Breast epithelium (tissue), 4 donors: ENCODE measurements at regions of chr16 and their contacts with region 1.

Region 1: DNA sequence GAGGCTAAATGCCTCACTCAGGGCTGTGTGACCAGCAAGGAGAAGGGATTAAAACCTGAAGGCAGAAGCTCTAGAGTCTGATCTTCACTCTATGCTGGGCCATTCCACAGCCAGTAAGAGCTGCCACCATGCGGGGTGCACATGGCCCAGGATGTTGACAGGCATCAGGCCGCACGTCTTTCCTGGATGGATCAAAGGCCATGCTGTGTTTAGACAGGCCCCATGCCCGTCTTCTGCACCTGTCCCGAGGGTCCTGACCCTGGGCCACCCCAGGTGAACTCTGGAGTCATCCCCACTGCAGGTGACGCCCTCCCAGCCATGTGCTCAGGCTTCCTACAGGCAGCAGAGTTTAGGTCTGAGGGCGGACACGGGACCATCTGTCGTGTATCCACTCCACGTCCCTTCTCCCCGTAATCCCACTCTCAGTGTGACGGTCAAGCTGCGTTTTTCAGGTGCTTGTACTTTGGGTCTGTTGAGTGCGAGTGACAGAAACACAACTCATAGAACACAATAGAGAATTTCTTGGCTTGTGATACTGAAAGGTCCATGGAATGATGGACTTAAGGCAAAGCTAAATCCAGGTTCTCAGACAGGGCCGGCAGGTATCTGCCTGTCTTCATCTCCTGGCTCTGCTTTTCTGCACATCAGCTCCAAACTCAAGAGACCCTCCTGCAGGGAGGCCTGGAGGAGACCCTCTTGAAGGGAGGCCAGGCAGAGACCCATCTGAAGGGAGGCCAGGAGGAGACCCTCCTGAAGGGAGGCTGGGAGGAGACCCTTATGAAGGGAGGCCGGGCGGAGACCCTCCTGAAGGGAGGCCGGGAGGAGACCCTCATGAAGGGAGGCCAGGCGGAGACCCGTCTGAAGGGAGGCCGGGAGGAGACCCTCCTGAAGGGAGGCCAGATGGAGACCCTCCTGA is 13.2 kb downstream of the ZNF469 start:
- DNase-seq: no peak
- H3K4me3 ChIP-seq: no peak overlapping the region
- H3K27ac ChIP-seq: no peak overlapping the region
- H3K4me1 ChIP-seq: no peaks in the 10 kb centered on the region
- H3K27me3 ChIP-seq: no peaks in the 10 kb centered on the region
- CTCF ChIP-seq: no peak
- POLR2A ChIP-seq: no peak

Region 2: DNA sequence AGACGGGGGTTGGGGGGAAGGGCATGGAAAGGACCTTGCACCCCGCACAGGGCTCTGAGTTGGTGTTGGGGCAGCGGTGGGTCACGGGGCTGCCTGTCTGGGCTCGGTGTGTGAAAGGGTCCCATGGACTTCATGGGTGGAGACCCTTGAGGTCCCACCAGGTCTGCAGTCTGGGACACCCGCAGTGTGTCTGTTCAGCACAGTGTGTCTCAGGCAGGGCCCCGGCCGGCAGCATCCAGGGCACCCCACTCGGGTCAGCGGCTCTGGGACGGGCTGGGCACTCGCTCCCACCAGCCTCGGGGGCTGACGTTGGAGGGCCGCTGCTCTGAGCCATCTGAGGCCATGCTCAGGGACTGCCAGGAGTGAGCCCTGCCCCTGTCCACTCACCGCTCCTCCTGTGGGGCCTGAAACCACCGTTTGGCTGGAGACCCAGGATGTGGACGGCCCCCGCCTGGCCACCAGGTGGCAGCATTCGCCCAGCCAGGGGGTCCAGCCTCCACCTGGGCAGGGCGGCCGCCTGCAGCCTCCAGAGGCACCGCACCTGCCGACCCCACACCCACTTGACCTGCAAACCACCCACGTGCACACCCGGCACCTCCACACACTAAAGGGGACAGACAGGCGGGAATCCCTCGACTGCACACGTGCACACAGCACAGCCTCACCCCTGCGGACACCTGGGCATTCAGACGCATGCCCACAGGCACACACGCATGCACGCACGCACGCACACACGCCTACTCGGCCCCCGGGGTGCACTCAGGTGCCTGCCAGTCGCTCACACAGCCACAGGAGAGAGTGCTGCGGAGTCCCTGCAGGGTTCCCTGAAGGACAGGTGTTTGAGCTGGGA is 47.0 kb after region 1 on chr16:
- intact Hi-C with region 1: loop called (anchors 2 kb)
- DNase-seq: peak; percentile 53 to 85
- H3K4me3 ChIP-seq: no peak overlapping the region
- H3K27ac ChIP-seq: no peak overlapping the region
- H3K4me1 ChIP-seq: peaks cover 0 to 7% of the 10 kb centered on the region in 2 donors
- H3K27me3 ChIP-seq: peaks cover 0 to 11% of the 10 kb centered on the region in 2 donors
- CTCF ChIP-seq: peak; percentile 74 to 98 (median 96)
- POLR2A ChIP-seq: no peak